HEK293 (cell line): ENCODE measurements at regions of chr9 and their contacts with region 1.

Region 1: DNA sequence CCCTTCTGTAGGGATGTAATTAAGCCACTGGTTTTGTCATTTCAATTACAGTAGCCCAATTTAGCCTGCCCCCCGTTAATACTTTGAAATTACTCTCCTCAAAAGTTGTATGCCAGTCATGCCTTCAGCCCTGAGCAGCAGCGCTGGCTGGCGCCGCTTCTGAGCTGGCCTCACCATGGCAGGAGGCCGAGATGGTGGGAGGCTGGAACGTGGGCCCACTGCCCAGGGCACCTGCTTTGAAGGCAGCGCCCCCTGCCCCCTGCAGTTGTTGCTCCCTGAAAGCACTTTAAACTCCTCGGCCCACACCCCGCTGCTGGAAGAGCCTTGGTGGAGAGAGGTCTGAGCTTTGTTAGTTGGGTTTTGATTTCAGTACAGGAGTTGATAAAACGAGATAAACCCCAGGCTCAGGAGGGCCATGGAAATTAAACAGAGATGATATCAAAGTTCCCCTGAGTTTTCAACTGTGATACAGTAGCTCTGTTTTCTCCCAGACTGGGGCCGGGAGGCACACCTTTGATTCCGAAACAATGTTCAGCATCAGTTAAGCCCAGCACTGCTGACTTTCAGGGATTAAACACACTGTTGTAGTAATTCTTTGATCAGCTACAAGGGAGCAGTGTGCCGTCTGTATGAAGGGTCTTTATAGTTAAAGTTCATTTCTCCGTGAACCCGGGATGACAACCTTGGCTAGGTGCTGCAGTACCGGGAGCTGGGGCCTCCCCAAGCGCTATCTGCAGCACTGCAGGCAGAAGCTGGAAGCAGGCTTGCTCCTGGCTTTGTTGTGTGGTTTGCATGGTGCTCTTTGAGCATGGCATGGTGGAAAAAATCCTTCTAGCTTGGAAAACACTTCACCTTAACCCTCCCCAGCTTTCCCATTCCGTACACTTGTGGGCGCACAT is 9.5 kb downstream of the MVB12B start:
- H3K4me3 ChIP-seq: no peak overlapping the region
- H3K27ac ChIP-seq: no peak overlapping the region
- H3K4me1 ChIP-seq: 0 out of 2 replicates have a peak, but pooled peaks cover 6% of the 10 kb centered on the region
- CTCF ChIP-seq: no peak

Region 2: GRCh38 chr9:125261501-125262293 is 1074.4 kb before region 1 on chr9 and contains the start of gene GAPVD1:
- CTCF ChIA-PET with region 1: no interaction called
- POLR2A ChIA-PET with region 1: interaction called, 10 read pairs
- H3K4me3 ChIP-seq: peak within 1 kb of the TSS; percentile 99
- H3K27ac ChIP-seq: peak within 1 kb of the TSS; percentile 80
- H3K4me1 ChIP-seq: no peaks in the 10 kb centered on the region
- CTCF ChIP-seq: peak; percentile 72

Region 3: GRCh38 chr9:125984461-125984860 is 351.6 kb before region 1 on chr9:
- CTCF ChIA-PET with region 1: no interaction called
- POLR2A ChIA-PET with region 1: interaction called, 12 read pairs
- H3K4me3 ChIP-seq: no peak overlapping the region
- H3K27ac ChIP-seq: no peak overlapping the region
- H3K4me1 ChIP-seq: no peaks in the 10 kb centered on the region
- CTCF ChIP-seq: no peak

Region 4: GRCh38 chr9:126366366-126367011 is 30.4 kb after region 1 on chr9:
- CTCF ChIA-PET with region 1: no interaction called
- POLR2A ChIA-PET with region 1: no interaction called
- H3K4me3 ChIP-seq: no peak overlapping the region
- H3K27ac ChIP-seq: no peak overlapping the region
- H3K4me1 ChIP-seq: no peaks in the 10 kb centered on the region
- CTCF ChIP-seq: no peak